Heart right ventricle (tissue), 16 donors: ENCODE measurements at regions of chr12 and their contacts with region 1.

Region 1: GRCh38 chr12:91627225-91627624 is 444.6 kb upstream of the DCN start:
- DNase-seq: no peak
- ATAC-seq: no peak
- H3K4me3 ChIP-seq: no peak overlapping the region
- H3K27ac ChIP-seq: no peak overlapping the region
- H3K4me1 ChIP-seq: peaks cover 0 to 3% (median 0%) of the 10 kb centered on the region in 9 donors
- H3K27me3 ChIP-seq: no peaks in the 10 kb centered on the region
- CTCF ChIP-seq: no peak

Region 2: DNA sequence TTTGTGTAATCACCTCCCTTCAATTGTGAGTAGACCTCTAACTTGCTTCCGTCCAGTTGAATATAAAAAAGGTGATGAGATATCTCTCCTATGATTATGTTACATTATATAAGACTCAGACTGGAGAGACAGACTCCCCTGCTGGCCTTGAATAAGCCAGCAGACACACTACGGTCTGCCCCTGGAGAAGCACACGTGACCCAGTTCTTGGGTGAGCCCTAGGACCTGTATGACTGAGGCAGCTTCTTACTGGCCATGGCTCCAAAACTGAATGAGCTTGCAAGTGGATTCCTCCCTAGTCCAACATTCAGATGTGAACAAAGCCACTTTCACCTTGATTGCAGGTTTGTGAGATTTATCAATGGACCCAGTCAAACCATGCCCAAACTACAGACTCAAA is 16.7 kb before region 1 on chr12:
- intact Hi-C with region 1: loop called in 1 of 10 experiments (anchors 2 kb)
- DNase-seq: no peak
- ATAC-seq: no peak
- H3K4me3 ChIP-seq: no peak overlapping the region
- H3K27ac ChIP-seq: no peak overlapping the region
- H3K4me1 ChIP-seq: peaks cover 0 to 12% (median 0%) of the 10 kb centered on the region in 9 donors
- H3K27me3 ChIP-seq: no peaks in the 10 kb centered on the region
- CTCF ChIP-seq: no peak

Region 3: DNA sequence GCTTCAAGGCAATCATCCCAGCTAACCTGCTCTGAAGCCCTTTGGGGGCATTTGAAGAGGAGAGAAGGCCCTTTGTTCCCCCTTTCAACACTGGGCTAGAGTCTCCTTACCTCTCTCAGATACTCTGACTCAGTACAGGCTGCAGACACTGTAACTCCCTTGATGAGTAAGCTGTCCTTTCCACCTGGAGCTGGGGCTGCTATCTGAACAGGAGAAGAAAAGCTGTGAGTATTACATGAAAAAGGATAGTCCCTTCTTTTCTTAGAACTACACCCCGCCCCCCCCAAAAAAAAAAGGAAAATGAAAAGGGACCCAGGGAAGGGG is 889.0 kb after region 1 on chr12:
- intact Hi-C with region 1: no loop called
- DNase-seq: no peak
- ATAC-seq: no peak
- H3K4me3 ChIP-seq: no peak overlapping the region
- H3K27ac ChIP-seq: no peak overlapping the region
- H3K4me1 ChIP-seq: peaks cover 0 to 24% (median 0%) of the 10 kb centered on the region in 9 donors
- H3K27me3 ChIP-seq: no peaks in the 10 kb centered on the region
- CTCF ChIP-seq: no peak